Endothelial cell of umbilical vein (primary cell): ENCODE measurements at regions of chr3 and their contacts with region 1.

Region 1: DNA sequence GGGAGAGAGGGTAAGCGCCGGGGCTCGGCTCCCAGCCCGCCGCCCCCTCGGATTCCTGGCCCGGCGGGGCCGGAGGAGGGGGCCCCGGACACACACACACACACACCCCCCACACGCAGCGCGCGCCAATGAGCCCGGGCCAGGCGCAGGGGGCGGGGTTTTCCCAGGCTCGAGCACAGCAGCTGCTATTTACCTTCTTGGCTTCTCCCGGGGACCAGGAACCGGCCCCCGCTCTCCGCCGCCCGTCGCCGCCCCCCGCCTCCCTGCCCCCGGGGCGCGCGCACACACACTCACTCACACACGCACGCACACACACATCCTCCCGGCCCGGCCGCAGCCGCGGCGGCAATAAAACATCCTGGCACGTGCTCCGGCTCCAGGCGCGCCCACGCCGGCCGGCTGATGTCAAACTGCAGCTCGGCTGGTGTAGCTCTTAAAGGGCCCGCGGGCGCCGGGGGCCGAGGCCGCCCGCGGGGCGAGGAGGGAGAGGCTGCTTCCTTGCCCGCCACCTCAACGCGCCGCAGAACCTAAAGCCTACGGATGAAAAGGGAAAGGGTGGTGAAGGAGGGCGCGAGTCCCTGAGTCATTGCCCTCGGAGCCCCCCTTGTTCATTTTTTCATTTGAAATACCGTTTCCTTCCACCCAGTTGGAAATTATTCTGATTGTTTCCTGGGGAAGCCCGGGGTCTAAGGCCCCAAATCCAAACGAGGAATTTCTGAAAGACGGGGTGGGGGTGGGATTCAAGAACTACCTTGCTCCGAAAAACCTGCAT is 1.0 kb upstream of the HES1 start:
- DNase-seq: peak; percentile 99
- H3K4me3 ChIP-seq: peak overlapping the region in 2 of 3 experiments; percentile 13 to 51
- H3K27ac ChIP-seq: peak overlapping the region; percentile 96
- H3K4me1 ChIP-seq: peaks cover 24% of the 10 kb centered on the region
- H3K27me3 ChIP-seq: no peaks in the 10 kb centered on the region
- CTCF ChIP-seq: no peak
- POLR2A ChIP-seq: peak; percentile 27

Region 2: DNA sequence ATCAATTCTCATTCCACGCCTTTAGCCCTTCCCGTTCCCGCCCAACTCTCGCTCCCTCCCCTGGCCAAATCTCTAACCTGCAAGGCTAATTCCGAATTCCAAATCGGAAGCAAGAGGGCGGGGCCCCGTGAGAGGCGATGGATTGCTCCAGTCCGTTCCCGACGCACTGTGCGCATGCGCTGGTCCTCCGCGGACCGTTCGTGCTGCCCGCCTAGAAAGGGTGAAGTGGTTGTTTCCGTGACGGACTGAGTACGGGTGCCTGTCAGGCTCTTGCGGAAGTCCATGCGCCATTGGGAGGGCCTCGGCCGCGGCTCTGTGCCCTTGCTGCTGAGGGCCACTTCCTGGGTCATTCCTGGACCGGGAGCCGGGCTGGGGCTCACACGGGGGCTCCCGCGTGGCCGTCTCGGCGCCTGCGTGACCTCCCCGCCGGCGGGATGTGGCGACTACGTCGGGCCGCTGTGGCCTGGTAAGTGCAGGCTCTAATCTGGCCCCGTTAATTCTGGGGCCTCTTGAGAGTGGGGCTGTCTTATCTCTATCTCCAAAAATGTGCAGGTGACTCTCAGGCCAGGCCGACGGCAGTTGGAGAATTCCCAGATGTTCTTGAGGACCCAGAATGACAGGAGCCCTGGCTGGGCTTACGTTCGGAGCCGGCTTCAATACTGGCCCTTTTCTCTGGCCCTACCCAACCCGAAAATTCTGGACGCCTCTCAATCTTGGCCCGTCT is 541.8 kb before region 1 on chr3 and contains the start of gene OPA1:
- CTCF ChIA-PET with region 1: no interaction called
- POLR2A ChIA-PET with region 1: no interaction called
- dilution Hi-C with region 1: no loop called
- intact Hi-C with region 1: loop called (anchors 1 kb)
- DNase-seq: peak; percentile 98
- H3K4me3 ChIP-seq: peak within 1 kb of the TSS; percentile 56 to 94 (median 85)
- H3K27ac ChIP-seq: peak within 1 kb of the TSS; percentile 80
- H3K4me1 ChIP-seq: peaks cover 18% of the 10 kb centered on the region
- H3K27me3 ChIP-seq: no peaks in the 10 kb centered on the region
- CTCF ChIP-seq: peak in 1 of 2 donors; percentile 24
- POLR2A ChIP-seq: peak; percentile 75
- total RNA-seq, gene OPA1: 57.8 and 62.0 TPM in 2 replicates

Region 3: DNA sequence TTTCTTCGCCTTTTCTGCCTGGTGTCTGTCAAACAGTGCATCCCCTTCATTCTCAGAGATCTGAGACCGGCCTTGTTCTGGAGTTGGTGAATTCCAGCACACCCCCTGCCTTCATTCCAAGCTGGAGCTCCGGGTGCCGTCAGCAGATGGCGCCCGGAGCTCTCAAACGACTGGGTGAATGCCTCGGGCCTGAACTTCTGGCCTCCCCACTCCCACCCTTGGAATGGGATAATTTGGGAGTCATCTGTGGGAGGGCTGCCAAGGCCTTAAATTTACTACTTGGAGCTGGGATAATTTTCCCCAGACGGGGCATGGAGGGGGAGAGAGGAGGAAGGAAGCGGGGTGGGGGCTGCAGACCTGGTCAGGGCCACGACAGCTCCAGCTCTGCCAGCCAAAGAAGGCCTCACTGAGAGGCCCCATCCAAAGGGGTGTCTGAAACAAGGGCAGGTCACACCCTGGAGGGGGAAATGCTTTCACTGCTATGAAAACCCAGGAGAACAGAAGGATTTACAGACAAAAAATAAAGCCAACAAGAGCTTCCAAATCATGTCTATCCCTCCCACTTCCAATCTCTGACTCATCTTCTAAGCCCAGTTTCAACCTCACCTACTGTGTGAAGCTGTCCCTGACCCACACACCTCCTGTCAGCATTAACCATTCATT is 354.0 kb before region 1 on chr3:
- CTCF ChIA-PET with region 1: interaction called, 178 read pairs
- POLR2A ChIA-PET with region 1: interaction called, 22 read pairs
- dilution Hi-C with region 1: no loop called
- intact Hi-C with region 1: loop called (anchors 1 kb)
- DNase-seq: peak; percentile 79
- H3K4me3 ChIP-seq: no peak overlapping the region
- H3K27ac ChIP-seq: peak overlapping the region; percentile 65
- H3K4me1 ChIP-seq: peaks cover 18% of the 10 kb centered on the region
- H3K27me3 ChIP-seq: peaks cover 17 to 19% of the 10 kb centered on the region in 2 experiments
- CTCF ChIP-seq: peak; percentile 84 to 88
- POLR2A ChIP-seq: no peak

Region 4: GRCh38 chr3:193851941-193852674 is 282.8 kb before region 1 on chr3:
- CTCF ChIA-PET with region 1: no interaction called
- POLR2A ChIA-PET with region 1: no interaction called
- dilution Hi-C with region 1: no loop called
- intact Hi-C with region 1: loop called (anchors 5 kb)
- DNase-seq: peak; percentile 34
- H3K4me3 ChIP-seq: no peak overlapping the region
- H3K27ac ChIP-seq: no peak overlapping the region
- H3K4me1 ChIP-seq: peaks cover 24% of the 10 kb centered on the region
- H3K27me3 ChIP-seq: no peaks in the 10 kb centered on the region
- CTCF ChIP-seq: no peak
- POLR2A ChIP-seq: no peak

Region 5: DNA sequence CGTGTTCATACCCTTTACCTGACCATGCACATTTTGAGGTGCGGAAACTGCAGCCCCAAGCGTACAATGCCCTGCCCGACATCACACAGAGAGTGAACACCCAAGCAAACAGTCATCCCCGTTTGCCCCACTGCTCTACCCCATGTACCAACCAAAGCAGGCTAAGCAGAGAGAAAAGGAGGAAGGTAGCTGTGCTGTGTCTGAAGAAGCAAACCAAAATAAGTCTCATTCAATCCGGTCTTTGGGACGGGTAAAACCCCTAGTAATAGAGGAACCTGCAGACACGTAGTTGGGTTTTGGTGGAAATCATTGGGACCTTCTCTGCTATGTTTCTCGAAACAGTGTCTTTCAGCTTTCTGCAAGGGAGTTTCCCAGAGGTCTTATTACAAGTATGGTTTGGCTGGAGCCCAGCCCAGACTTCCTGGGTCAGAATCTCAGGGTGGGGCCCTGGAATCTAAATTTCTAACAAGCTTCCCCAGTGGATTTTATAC is 163.6 kb before region 1 on chr3:
- CTCF ChIA-PET with region 1: interaction called, 6 read pairs
- POLR2A ChIA-PET with region 1: no interaction called
- dilution Hi-C with region 1: no loop called
- intact Hi-C with region 1: loop called (anchors 1 kb)
- DNase-seq: no peak
- H3K4me3 ChIP-seq: no peak overlapping the region
- H3K27ac ChIP-seq: no peak overlapping the region
- H3K4me1 ChIP-seq: peaks cover 20% of the 10 kb centered on the region
- H3K27me3 ChIP-seq: no peaks in the 10 kb centered on the region
- CTCF ChIP-seq: no peak
- POLR2A ChIP-seq: no peak

Region 6: DNA sequence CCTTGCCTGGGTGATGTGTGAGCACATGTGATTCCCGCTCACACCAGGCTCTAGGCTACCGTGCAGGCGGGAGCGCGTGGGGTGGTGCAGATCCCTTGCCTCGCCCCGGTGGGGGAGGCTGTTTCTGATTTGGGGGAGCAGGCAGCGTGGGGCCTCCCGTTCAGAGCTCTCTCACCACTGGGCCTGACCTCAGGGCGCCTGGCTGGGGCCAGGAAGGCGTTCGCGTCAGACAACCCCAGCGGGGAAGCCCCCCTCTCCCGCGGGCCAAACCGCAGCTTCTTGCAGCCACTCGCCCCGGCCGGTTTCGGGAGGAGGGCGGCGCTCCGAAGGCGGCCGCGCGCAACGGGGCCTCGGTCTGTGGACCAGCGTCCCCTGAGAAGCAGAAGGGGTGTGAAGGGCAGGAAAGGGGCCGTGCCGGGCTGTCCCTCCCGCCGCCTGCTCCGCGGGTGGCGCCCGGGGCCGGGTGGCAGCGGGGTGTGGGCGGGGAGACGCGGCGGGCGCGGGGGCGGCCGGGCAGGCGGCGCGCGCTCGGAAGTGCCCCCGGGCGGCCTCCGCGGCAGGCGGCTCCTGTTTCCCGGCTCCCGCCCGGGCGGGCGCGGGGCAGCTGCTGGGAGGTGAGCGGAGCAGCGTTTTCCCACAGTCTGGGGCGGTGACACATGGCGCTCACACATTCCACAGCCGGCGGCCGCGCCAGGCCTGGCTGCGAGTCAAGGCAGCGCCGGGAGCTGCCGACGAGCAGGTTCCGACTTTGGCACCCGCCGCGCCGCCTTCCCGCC is 64.1 kb before region 1 on chr3:
- CTCF ChIA-PET with region 1: interaction called, 3 read pairs
- POLR2A ChIA-PET with region 1: interaction called, 7 read pairs
- dilution Hi-C with region 1: no loop called
- intact Hi-C with region 1: loop called (anchors 1 kb)
- DNase-seq: peak; percentile 98
- H3K4me3 ChIP-seq: peak overlapping the region in 2 of 3 experiments; percentile 23
- H3K27ac ChIP-seq: peak overlapping the region; percentile 87
- H3K4me1 ChIP-seq: peaks cover 15% of the 10 kb centered on the region
- H3K27me3 ChIP-seq: no peaks in the 10 kb centered on the region
- CTCF ChIP-seq: no peak
- POLR2A ChIP-seq: peak; percentile 45

Region 7: DNA sequence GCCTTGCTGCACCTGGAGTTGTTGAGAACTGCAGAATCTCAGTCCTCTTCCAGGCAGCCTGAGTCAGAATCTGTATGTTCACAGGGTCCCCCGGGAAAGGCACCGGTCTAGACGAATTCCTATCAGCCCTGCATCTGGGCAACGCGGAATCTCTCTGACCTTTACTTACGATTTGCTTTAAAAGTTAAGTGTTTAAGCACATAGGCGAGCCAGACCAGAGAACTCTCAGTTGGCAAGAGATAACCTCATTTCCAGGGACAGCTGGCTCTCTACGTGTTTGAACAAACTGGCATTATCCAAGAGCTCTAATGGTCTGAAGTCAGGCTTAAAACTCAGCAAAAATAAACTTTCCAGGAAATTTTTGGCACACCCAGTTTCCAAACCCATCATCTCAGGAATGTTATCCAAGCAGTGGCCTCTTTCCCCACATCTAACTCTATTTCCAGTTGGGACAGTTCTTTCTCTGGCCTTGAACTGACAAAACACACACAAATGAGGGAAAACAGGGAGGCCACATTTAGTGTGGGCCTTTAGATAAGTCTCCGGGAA is 54.4 kb after region 1 on chr3:
- CTCF ChIA-PET with region 1: no interaction called
- POLR2A ChIA-PET with region 1: no interaction called
- dilution Hi-C with region 1: no loop called
- intact Hi-C with region 1: no loop called
- DNase-seq: peak; percentile 66
- H3K4me3 ChIP-seq: no peak overlapping the region
- H3K27ac ChIP-seq: no peak overlapping the region
- H3K4me1 ChIP-seq: peaks cover 8% of the 10 kb centered on the region
- H3K27me3 ChIP-seq: no peaks in the 10 kb centered on the region
- CTCF ChIP-seq: no peak
- POLR2A ChIP-seq: no peak

Region 8: DNA sequence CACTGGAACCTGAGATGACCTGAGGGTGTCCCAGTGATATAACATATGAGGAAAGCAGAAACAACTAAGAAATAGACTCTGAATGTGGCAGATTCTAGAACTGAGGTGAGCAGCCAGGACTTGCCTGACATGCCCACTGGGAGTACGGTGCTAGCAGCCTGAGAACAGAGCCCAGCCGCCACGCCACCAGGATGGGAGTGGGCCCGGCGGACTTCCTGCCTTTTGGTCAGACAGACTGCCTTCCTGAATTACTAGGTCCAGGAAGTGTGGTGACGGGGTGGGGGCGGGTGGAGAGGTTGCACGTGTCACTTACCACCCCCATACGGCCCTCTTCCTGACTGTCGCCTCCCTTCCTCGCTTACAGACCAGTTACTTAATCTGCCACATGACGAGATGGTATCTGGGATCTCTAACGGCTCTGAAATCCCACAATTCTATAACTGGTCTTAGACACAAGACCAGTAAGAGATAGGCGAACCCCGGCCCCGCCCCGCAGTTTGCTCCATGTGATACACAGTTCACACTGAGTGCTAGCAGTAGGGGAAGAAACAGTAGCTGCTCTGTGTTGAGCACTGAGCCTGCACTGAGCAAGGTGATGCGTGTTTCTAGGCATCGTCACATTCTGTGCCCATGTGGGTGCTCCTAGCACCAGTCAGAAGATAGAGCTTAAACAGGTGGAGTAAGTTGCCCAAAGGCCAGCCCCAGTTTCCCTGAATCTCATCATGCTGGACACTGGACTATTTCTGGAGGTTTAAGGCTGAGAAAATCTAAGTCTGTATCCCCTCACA is 120.5 kb after region 1 on chr3:
- CTCF ChIA-PET with region 1: no interaction called
- POLR2A ChIA-PET with region 1: no interaction called
- dilution Hi-C with region 1: no loop called
- intact Hi-C with region 1: loop called (anchors 1 kb)
- DNase-seq: peak; percentile 94
- H3K4me3 ChIP-seq: no peak overlapping the region
- H3K27ac ChIP-seq: peak overlapping the region; percentile 85
- H3K4me1 ChIP-seq: peaks cover 14% of the 10 kb centered on the region
- H3K27me3 ChIP-seq: no peaks in the 10 kb centered on the region
- CTCF ChIP-seq: peak in 1 of 2 donors; percentile 6
- POLR2A ChIP-seq: no peak